Stomach (tissue), 19 donors: ENCODE measurements at regions of chr1 and their contacts with region 1.

Region 1: DNA sequence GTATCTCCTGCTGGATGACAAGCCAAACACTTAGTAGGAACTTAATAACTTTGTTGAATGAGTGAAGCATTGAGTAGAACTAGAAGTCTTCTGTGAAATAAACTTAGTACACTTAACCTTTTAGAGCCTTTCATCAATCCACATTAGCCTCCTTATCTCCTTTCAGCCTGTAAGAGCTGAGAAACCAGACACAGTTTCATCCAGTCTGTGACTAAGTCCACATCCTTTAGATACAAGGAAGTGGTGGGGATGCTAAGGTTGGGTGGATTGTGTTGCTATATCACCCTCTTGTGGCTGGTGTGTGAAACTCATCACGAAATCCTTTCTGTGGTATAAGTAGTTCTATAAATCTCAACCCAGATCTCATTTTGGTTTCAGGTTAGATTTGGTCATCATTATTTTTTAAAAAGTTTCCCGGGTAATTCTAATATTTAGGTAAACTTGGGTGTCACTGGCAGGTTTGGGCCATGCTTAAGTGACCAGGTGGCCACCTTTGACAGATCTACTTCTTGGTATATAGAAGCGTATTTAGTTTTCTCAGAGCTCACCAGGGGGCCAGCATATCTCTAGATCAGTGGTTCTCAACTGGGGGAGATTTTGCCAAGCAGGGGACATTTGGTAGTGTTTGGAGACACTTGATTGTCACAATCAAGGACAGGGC is 27.8 kb upstream of the CD84 start:
- DNase-seq: peak; percentile 60 to 88
- H3K4me3 ChIP-seq: no peak overlapping the region
- H3K27ac ChIP-seq: no peak overlapping the region
- H3K4me1 ChIP-seq: peaks cover 0 to 11% (median 0%) of the 10 kb centered on the region in 4 donors
- H3K27me3 ChIP-seq: peaks cover 0 to 4% (median 0%) of the 10 kb centered on the region in 3 donors
- CTCF ChIP-seq: peak in 5 of 7 experiments; percentile 29 to 88 (median 66)
- EP300 ChIP-seq: no peak
- POLR2A ChIP-seq: no peak

Region 2: DNA sequence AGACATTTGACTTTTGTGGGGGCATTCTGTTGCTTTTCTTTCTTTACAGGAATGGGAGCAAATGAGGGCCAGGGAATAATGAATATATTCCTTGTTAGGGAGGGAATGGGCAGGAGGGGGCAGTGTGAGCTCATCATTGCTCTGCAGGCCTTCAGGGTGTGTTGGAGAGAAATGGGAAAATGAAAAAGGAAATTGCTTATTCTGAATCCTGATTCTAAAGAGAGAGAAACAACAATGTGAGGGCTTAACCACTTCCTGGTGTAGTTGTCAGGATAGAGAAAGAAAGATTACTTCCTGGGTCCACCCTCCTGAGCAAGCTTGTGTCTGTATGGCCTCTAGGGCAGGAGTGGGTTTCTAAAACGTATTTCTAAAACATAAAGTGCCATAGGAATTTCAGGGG is 178.5 kb before region 1 on chr1:
- intact Hi-C with region 1: loop called (anchors 5 kb)
- DNase-seq: peak; percentile 66 to 84
- H3K4me3 ChIP-seq: no peak overlapping the region
- H3K27ac ChIP-seq: peak overlapping the region in 3 of 5 donors; percentile 39 to 76 (median 51)
- H3K4me1 ChIP-seq: peaks cover 5 to 20% (median 13%) of the 10 kb centered on the region in 4 donors
- H3K27me3 ChIP-seq: no peaks in the 10 kb centered on the region
- CTCF ChIP-seq: peak in 4 of 7 experiments; percentile 30 to 80 (median 68)
- EP300 ChIP-seq: no peak
- POLR2A ChIP-seq: no peak

Region 3: GRCh38 chr1:160925652-160926241 is 318.6 kb after region 1 on chr1:
- intact Hi-C with region 1: no loop called
- DNase-seq: no peak
- H3K4me3 ChIP-seq: no peak overlapping the region
- H3K27ac ChIP-seq: peak overlapping the region; percentile 37 to 70 (median 43)
- H3K4me1 ChIP-seq: no peaks in the 10 kb centered on the region
- H3K27me3 ChIP-seq: no peaks in the 10 kb centered on the region
- CTCF ChIP-seq: no peak
- EP300 ChIP-seq: no peak
- POLR2A ChIP-seq: no peak